Ascending aorta (tissue), 2 donors: ENCODE measurements at regions of chr2 and their contacts with region 1.

Region 1: GRCh38 chr2:32772638-32773447 is 145.0 kb downstream of the TTC27 start:
- DNase-seq: no peak
- H3K4me3 ChIP-seq: no peak overlapping the region
- H3K27ac ChIP-seq: no peak overlapping the region
- H3K4me1 ChIP-seq: no peaks in the 10 kb centered on the region
- H3K27me3 ChIP-seq: no peaks in the 10 kb centered on the region
- CTCF ChIP-seq: peak; percentile 52 to 68 (median 55)

Region 2: DNA sequence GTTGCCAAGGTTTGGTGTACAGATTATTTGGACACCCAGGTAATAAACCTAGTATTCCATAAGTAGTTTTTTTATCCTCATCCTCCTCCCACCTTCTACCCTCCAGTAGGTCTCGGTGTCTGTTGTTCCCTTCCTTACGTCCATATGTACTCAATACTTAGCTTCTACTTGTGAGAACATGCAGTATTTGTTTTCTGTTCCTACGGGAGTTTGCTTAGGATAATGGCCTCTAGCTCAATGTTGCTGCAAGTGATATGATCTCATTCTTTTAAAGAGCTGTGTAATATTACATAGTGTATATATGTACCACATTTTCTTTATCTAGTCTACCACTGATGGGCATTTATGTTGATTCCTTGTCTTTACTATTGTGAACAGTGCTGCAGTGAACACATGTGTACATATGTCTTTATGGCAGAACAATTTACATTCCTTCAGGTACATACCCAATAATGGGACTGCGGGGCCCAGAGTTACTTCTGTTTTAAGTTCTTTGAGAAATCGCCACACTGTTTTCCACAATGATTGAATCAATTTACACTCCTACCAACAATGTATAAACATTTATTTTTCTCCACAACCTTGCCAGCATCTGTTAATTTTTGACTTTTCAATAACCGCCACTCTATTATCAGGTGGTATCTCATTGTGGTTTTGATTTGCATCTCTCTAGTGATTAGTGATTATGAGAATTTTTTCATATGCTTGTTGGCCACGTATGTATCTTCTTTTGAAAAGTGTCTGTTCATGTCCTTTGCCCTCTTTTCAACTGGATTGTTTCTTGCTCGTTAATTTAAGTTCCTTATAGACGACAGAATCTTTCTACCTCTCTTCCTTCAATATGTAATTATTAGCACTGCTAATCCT is 850.1 kb before region 1 on chr2:
- intact Hi-C with region 1: no loop called
- DNase-seq: no peak
- H3K4me3 ChIP-seq: no peak overlapping the region
- H3K27ac ChIP-seq: no peak overlapping the region
- H3K4me1 ChIP-seq: no peaks in the 10 kb centered on the region
- H3K27me3 ChIP-seq: no peaks in the 10 kb centered on the region
- CTCF ChIP-seq: no peak

Region 3: GRCh38 chr2:32553829-32554432 is 218.9 kb before region 1 on chr2:
- intact Hi-C with region 1: loop called (anchors 5 kb)
- DNase-seq: no peak
- H3K4me3 ChIP-seq: no peak overlapping the region
- H3K27ac ChIP-seq: no peak overlapping the region
- H3K4me1 ChIP-seq: no peaks in the 10 kb centered on the region
- H3K27me3 ChIP-seq: no peaks in the 10 kb centered on the region
- CTCF ChIP-seq: peak; percentile 58 to 70 (median 64)

Region 4: GRCh38 chr2:32678825-32679224 is 94.0 kb before region 1 on chr2:
- intact Hi-C with region 1: no loop called
- DNase-seq: no peak
- H3K4me3 ChIP-seq: no peak overlapping the region
- H3K27ac ChIP-seq: peak overlapping the region in 1 of 2 donors; percentile 28
- H3K4me1 ChIP-seq: peaks cover 0 to 10% of the 10 kb centered on the region in 2 donors
- H3K27me3 ChIP-seq: no peaks in the 10 kb centered on the region
- CTCF ChIP-seq: no peak

Region 5: DNA sequence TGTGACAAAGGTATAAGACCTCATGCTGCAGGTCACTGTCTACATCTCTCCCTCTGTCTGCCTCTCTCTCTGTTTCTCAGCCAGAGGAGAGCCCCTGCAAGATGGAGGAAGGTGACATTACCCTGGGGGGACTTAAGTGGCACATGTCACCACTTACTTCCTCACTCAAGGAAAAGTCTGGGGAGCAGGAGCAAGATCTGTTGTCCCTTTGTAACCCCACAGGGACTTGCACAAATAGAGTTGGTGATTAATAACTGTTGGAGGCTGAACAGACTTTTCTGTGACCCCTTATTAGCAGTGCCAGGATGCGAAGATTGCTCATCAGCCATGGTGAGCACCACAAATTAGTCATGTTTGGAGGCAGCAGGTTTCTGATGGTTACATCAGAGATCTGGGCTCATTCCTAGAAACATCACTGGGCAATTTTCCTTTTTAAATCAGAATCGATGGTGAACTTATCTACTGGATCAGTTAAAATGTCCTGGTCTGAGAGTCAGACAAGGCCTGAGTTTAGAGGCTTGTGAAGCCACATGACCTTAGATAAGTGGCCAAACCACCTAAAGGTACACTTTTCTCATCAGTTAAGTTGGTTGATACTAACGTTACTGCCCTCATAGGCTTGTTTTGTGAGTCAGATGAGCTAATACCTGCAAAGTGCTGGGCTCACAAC is 92.7 kb after region 1 on chr2:
- intact Hi-C with region 1: no loop called
- DNase-seq: no peak
- H3K4me3 ChIP-seq: no peak overlapping the region
- H3K27ac ChIP-seq: peak overlapping the region; percentile 23 to 55
- H3K4me1 ChIP-seq: peaks cover 0 to 3% of the 10 kb centered on the region in 2 donors
- H3K27me3 ChIP-seq: no peaks in the 10 kb centered on the region
- CTCF ChIP-seq: no peak

Region 6: DNA sequence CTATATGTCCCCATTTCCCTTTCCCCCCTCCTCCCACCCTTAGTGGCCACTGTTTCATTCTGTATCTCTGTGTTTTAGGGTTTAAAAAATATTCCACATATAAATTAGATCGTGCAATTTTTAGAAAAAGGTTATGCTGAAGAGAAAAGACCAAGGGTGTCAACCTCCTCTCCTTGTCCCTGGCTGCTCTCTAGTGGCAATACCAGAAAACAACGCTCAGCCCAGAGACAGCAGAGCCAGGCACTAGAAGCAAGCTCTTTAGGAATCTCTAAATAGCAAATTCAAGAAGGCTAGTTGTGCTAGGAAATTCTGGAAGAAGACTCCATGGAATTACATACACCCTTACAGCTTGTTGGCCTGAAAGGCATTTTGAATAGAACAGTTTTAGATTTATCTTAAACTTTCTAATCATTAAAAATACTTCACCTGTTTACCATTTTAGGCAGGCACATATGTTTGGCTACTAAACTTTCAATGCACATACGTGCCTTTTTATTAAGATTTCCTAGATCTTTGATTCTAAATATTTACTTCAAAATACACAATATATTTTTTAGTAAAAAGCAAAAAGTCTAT is 668.5 kb after region 1 on chr2:
- intact Hi-C with region 1: loop called (anchors 5 kb)
- DNase-seq: peak in 1 of 2 donors; percentile 80
- H3K4me3 ChIP-seq: no peak overlapping the region
- H3K27ac ChIP-seq: no peak overlapping the region
- H3K4me1 ChIP-seq: peaks cover 5 to 7% of the 10 kb centered on the region in 2 donors
- H3K27me3 ChIP-seq: no peaks in the 10 kb centered on the region
- CTCF ChIP-seq: peak; percentile 62 to 87 (median 75)

Region 7: GRCh38 chr2:33484042-33484621 is 711.3 kb after region 1 on chr2:
- intact Hi-C with region 1: loop called (anchors 5 kb)
- DNase-seq: no peak
- H3K4me3 ChIP-seq: no peak overlapping the region
- H3K27ac ChIP-seq: peak overlapping the region; percentile 36 to 48
- H3K4me1 ChIP-seq: peaks cover 0 to 13% of the 10 kb centered on the region in 2 donors
- H3K27me3 ChIP-seq: no peaks in the 10 kb centered on the region
- CTCF ChIP-seq: no peak